GM10248 (cell line): ENCODE measurements at regions of chr17 and their contacts with region 1.

Region 1: GRCh38 chr17:49447628-49448302 is 33.1 kb upstream of the PHB1 start:
- DNase-seq: no peak
- CTCF ChIP-seq: no peak

Region 2: DNA sequence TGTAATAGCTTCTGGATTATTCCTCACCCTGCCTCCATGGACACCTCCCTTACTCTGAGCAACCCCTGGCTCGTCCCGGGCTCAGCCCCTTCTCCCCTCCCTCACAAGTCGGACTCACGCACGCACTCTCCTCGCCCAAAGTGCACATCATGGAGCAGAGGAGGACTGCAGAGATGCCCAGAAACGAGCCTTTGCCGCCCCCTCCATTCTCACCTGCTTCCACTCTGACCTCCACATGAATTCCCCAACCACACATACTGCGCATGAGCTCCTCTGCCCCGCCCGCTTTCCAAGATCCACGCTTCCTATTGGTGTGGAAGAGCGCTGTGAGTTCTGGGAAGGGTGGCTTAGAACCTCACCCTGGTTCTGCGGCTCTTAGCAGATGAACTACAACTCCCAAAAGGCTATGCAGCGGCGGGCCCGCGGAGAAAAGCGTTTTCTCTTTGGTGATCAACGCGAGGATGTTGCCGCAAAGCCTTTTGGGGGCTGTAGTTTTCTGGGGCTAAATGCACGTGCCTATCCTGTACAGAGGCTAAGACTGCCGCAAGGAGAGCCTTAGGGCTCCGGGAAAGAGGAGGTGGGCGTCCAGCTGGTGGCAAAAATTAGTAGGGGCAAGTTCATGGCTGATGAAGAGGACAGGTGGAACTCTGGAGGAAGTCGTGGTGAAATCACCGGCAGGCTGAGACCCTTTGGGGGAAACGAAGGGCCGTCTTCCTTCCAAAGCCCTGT is 33.0 kb before region 1 on chr17 and contains the start of gene PHB1:
- CTCF ChIA-PET with region 1: no interaction called
- POLR2A ChIA-PET with region 1: no interaction called
- DNase-seq: peak; percentile 97
- CTCF ChIP-seq: no peak

Region 3: DNA sequence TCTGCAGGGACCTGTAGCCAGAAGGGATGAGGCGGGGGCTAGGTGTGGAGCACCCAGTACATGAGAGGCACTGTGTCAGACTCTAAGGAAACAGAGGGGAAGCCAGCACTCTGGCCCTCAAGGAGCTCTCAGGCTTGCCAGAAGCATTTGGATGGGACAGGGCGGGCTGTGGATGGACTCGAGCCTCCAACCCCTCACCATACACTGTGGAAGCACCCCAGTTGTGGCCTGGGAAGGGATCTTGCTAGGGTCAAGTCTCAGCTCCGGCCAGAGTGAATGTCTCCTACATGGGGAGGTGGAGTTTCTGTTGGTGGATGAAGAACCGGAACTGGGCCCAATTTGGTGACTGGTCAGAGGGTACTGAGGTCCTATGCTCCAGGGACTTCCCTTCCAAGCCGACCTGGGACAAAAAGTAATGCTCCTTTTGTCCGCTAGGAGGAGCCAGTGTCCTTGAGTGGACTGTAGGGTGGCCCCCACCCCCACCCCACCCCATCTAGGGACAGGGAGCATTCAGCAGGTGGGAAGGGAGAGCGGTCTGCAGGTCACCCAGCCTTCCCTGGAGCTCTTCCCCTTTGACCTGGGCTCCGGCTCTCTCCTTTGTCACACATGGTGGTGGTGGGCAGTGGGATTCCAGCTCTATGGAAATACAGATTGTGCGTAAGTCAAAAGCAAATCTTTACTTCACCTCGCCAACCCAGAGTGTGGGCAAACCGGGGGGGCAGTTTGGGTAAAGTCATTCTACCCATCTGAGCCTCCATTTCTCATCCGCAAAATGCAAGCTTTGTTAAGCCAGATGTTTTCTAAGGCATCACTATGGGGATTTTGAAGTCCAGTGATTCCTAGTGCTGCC is 12.7 kb before region 1 on chr17:
- CTCF ChIA-PET with region 1: interaction called, 11 read pairs
- POLR2A ChIA-PET with region 1: no interaction called
- DNase-seq: peak; percentile 79
- CTCF ChIP-seq: peak; percentile 57